ENCODE measurements at regions of chr6 and their contacts with region 1.

Region 1: DNA sequence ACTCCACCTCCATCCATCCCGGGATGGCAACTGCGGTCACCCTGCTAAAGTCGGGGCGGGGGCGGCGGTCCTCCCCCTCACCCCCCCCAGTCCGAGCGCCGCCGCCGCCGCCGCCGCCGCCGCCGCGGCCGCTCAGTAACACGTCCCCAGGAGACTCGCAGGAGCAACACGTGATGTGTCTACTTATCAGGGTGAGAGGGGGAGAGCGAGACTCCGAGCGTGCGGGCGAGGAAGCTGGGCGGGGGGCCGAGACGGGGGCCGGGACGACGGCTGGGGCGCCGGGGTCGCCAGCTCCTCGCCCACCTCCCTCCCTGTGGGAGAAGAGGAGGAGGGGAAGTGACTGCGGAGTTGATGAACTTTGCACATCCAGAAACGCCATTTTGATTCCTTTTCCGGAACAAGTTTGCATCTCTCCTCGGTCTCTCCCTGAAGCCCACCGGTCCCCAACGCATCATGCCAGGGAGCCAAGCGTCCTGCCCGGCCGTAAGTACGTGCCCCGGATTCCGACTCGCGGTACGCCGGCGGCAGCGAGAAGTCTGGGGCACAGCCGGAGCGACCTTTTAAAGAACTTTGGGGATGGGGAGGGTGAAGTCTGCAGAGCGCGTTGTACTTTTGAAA is at the start of gene RREB1:
- DNase-seq: peak; percentile 25 to 75
- H3K4me3 ChIP-seq: peak within 1 kb of the TSS; percentile 78 to 97
- H3K27ac ChIP-seq: peak within 1 kb of the TSS; percentile 88 to 95
- H3K4me1 ChIP-seq: peaks cover 0 to 6% of the 10 kb centered on the region in 2 donors
- H3K27me3 ChIP-seq: no peaks in the 10 kb centered on the region
- CTCF ChIP-seq: no peak
- total RNA-seq, gene RREB1: 48.9 TPM

Region 2: GRCh38 chr6:7140631-7141378 is 33.1 kb after region 1 on chr6:
- intact Hi-C with region 1: loop called (anchors 1 kb)
- DNase-seq: peak; percentile 50 to 92
- H3K4me3 ChIP-seq: peak overlapping the region; percentile 75 to 76
- H3K27ac ChIP-seq: peak overlapping the region; percentile 90 to 96
- H3K4me1 ChIP-seq: peaks cover 0 to 17% of the 10 kb centered on the region in 2 donors
- H3K27me3 ChIP-seq: no peaks in the 10 kb centered on the region
- CTCF ChIP-seq: no peak

Region 3: GRCh38 chr6:7169251-7169721 is 61.6 kb after region 1 on chr6:
- intact Hi-C with region 1: loop called (anchors 2 kb)
- DNase-seq: peak in 1 of 2 donors; percentile 80
- H3K4me3 ChIP-seq: no peak overlapping the region
- H3K27ac ChIP-seq: peak overlapping the region; percentile 76 to 83
- H3K4me1 ChIP-seq: peaks cover 13 to 49% of the 10 kb centered on the region in 2 donors
- H3K27me3 ChIP-seq: no peaks in the 10 kb centered on the region
- CTCF ChIP-seq: no peak

Region 4: GRCh38 chr6:7219310-7219709 is 111.6 kb after region 1 on chr6:
- intact Hi-C with region 1: loop called (anchors 5 kb)
- DNase-seq: no peak
- H3K4me3 ChIP-seq: no peak overlapping the region
- H3K27ac ChIP-seq: no peak overlapping the region
- H3K4me1 ChIP-seq: no peaks in the 10 kb centered on the region
- H3K27me3 ChIP-seq: no peaks in the 10 kb centered on the region
- CTCF ChIP-seq: no peak

Region 5: DNA sequence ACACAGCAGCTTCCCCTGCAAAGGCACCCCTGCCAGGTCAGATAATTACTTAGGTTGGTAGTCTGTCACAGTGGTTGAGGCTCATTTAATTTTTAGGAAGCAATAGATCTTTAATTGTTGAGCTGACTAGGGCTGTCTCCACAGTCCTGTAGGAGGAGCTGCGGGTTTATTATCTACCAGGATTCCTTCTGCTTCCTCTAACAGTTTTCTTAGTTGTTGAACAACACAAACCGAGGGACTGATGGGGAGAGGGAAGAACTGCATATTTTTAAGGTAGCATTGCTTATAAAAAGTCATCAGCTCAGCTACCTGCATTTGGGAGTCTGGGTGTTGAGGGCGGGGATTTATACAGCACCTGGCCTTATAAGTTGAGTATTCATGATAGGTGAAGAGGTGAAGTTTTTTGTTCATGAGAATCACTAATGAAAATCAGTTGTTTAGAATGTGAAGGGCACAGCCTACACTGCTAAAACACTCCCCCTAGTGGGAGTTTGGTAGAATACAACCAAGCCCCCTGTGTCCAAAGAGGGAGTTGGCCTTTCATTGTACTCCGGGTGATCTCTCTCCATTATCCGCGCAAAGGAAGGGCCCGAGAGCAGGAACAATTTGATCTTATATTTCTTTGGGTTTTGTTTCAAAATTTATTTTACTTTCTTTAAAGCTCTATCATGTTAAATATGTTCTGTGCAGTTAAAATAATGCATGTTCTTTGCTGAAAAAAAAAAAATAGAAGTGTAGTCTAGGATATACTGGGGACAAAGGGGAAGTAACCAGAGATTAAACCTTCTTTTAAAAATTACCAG is 135.7 kb after region 1 on chr6:
- intact Hi-C with region 1: loop called (anchors 5 kb)
- DNase-seq: no peak
- H3K4me3 ChIP-seq: no peak overlapping the region
- H3K27ac ChIP-seq: peak overlapping the region in 1 of 2 donors; percentile 23
- H3K4me1 ChIP-seq: no peaks in the 10 kb centered on the region
- H3K27me3 ChIP-seq: no peaks in the 10 kb centered on the region
- CTCF ChIP-seq: peak; percentile 57 to 87 (median 81)

Region 6: GRCh38 chr6:7589949-7590917 is 482.5 kb after region 1 on chr6 and contains the start of gene SNRNP48:
- intact Hi-C with region 1: loop called (anchors 10 kb)
- DNase-seq: peak; percentile 86 to 97
- H3K4me3 ChIP-seq: peak within 1 kb of the TSS; percentile 92 to 94
- H3K27ac ChIP-seq: peak within 1 kb of the TSS; percentile 57 to 58
- H3K4me1 ChIP-seq: peaks cover 0 to 13% of the 10 kb centered on the region in 2 donors
- H3K27me3 ChIP-seq: no peaks in the 10 kb centered on the region
- CTCF ChIP-seq: peak in 1 of 3 experiments; percentile 9
- total RNA-seq, gene SNRNP48: 1.3 TPM

Measured in ascending aorta (tissue), 2 donors.